ENCODE measurements at regions of chr11 and their contacts with region 1.

Region 1: DNA sequence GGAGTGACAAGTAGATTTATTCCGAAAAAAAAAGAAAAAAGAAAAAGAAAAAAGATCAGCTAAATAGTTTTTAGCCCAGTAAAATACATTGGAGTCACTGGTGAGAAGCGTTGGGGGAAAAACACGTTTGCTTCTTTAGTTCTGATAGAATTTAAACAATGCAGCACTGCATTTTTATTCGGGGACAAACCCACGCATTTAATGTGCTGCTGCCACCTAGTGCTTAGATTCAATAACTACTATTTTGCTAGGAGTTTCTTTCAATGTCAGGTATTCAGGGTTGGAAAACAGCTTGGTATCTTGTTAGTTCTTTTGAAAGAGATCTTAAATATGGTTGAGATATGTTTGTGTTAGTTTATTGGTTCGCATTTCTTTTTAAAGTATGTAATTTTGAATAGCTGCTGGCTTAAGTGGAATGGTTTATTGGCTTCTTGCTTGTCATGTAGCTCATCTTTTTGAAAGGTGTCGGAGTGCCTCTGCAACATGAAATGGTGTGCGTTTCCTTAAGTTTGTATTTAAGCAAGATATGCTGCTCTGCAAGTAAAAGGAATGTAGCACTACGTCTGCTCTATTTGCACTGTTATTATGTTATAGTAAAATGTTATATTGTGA is 41.9 kb downstream of the SVIP start:
- DNase-seq: peak; percentile 56
- H3K4me3 Mint-ChIP-seq: no peak overlapping the region
- H3K27ac Mint-ChIP-seq: no peak overlapping the region
- H3K4me1 Mint-ChIP-seq: no peaks in the 10 kb centered on the region
- H3K27me3 Mint-ChIP-seq: peaks cover 24% of the 10 kb centered on the region
- CTCF ChIP-seq: peak; percentile 52

Region 2: GRCh38 chr11:22244986-22245592 is 542.6 kb before region 1 on chr11:
- CTCF ChIA-PET with region 1: interaction called, 9 read pairs
- POLR2A ChIA-PET with region 1: no interaction called
- intact Hi-C with region 1: loop called (anchors 1 kb)
- DNase-seq: peak; percentile 43
- H3K4me3 Mint-ChIP-seq: no peak overlapping the region
- H3K27ac Mint-ChIP-seq: no peak overlapping the region
- H3K4me1 Mint-ChIP-seq: no peaks in the 10 kb centered on the region
- H3K27me3 Mint-ChIP-seq: peaks cover 61% of the 10 kb centered on the region
- CTCF ChIP-seq: peak; percentile 53

Region 3: GRCh38 chr11:22337596-22338485 is 449.8 kb before region 1 on chr11 and contains the start of gene SLC17A6:
- CTCF ChIA-PET with region 1: interaction called, 19 read pairs
- POLR2A ChIA-PET with region 1: no interaction called
- intact Hi-C with region 1: no loop called
- DNase-seq: peak; percentile 65
- H3K4me3 Mint-ChIP-seq: no peak within 1 kb of the TSS
- H3K27ac Mint-ChIP-seq: no peak within 1 kb of the TSS
- H3K4me1 Mint-ChIP-seq: no peaks in the 10 kb centered on the region
- H3K27me3 Mint-ChIP-seq: peaks cover 71% of the 10 kb centered on the region
- CTCF ChIP-seq: no peak
- total RNA-seq, gene SLC17A6: not detected in 2 replicates

Region 4: DNA sequence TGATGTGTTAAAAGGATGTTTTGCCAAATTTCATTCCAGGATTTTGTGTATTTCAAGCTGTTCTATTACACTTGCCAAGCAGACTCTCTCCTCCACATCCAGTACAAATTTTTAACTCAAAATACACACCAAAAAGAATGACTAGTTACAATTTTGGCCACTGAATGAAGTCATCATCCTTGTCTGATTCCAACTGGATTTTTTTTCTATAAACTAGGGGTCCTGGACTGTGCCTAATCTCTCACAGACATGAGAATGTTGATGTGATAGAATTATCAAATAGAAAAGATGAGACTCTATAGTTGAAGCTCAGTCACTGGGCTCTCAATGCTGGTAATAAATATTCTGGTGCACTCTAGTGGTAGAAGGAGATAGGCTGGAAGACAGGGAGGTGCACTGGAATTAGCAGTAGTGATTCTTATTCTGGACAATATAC is 247.8 kb before region 1 on chr11:
- CTCF ChIA-PET with region 1: interaction called, 30 read pairs
- POLR2A ChIA-PET with region 1: no interaction called
- intact Hi-C with region 1: loop called (anchors 1 kb)
- DNase-seq: peak; percentile 51
- H3K4me3 Mint-ChIP-seq: no peak overlapping the region
- H3K27ac Mint-ChIP-seq: no peak overlapping the region
- H3K4me1 Mint-ChIP-seq: no peaks in the 10 kb centered on the region
- H3K27me3 Mint-ChIP-seq: peaks cover 42% of the 10 kb centered on the region
- CTCF ChIP-seq: peak; percentile 65

Region 5: GRCh38 chr11:22670830-22671229 is 116.8 kb before region 1 on chr11:
- CTCF ChIA-PET with region 1: interaction called, 15 read pairs
- POLR2A ChIA-PET with region 1: interaction called, 3 read pairs
- intact Hi-C with region 1: loop called (anchors 2 kb)
- DNase-seq: peak; percentile 25
- H3K4me3 Mint-ChIP-seq: no peak overlapping the region
- H3K27ac Mint-ChIP-seq: no peak overlapping the region
- H3K4me1 Mint-ChIP-seq: no peaks in the 10 kb centered on the region
- H3K27me3 Mint-ChIP-seq: peaks cover 96% of the 10 kb centered on the region
- CTCF ChIP-seq: peak; percentile 23

Region 6: GRCh38 chr11:22763166-22763565 is 24.5 kb before region 1 on chr11:
- CTCF ChIA-PET with region 1: no interaction called
- POLR2A ChIA-PET with region 1: no interaction called
- intact Hi-C with region 1: no loop called
- DNase-seq: no peak
- H3K4me3 Mint-ChIP-seq: no peak overlapping the region
- H3K27ac Mint-ChIP-seq: no peak overlapping the region
- H3K4me1 Mint-ChIP-seq: no peaks in the 10 kb centered on the region
- H3K27me3 Mint-ChIP-seq: peaks cover 38% of the 10 kb centered on the region
- CTCF ChIP-seq: no peak

Region 7: DNA sequence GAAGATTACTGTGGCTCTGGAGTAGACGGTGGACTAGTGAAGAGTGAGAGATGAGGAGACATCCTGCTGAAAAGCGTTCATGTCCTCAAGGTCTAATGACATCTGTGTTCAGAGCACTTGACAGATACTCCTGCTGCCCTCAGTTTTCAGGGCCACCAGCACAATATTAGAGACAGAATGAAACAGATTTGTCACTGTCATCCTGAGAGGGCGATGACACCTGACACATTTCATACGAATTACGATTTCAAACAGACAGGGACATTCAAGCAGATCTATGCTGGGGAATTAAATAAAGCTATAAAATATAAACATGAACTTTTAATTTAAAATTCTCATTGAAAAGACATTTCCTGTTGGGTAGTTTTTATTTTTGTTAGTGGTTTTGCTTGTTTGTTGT is 12.8 kb after region 1 on chr11:
- CTCF ChIA-PET with region 1: interaction called, 12 read pairs
- POLR2A ChIA-PET with region 1: no interaction called
- intact Hi-C with region 1: no loop called
- DNase-seq: no peak
- H3K4me3 Mint-ChIP-seq: no peak overlapping the region
- H3K27ac Mint-ChIP-seq: no peak overlapping the region
- H3K4me1 Mint-ChIP-seq: no peaks in the 10 kb centered on the region
- H3K27me3 Mint-ChIP-seq: peaks cover 3% of the 10 kb centered on the region
- CTCF ChIP-seq: no peak

Region 8: DNA sequence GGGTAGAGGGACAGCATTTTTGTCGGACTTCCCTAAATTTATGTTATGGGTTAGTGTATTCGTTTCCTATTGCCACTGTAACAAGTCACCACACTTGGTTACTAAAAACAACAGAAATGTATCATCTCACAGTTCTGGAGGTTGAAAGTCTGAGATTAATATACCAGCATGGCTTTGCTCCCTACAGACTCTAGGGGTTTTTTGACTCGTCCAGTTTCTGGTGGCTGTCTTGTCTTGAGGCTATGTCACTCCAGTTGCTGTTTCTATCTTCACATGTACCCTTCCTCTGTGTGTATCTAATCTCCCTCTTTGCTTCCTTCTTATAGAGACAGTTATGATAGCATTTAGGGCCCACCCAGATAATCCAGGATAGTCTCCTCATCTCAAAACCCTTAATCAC is 81.7 kb after region 1 on chr11:
- CTCF ChIA-PET with region 1: no interaction called
- POLR2A ChIA-PET with region 1: no interaction called
- intact Hi-C with region 1: no loop called
- DNase-seq: no peak
- H3K4me3 Mint-ChIP-seq: no peak overlapping the region
- H3K27ac Mint-ChIP-seq: no peak overlapping the region
- H3K4me1 Mint-ChIP-seq: no peaks in the 10 kb centered on the region
- H3K27me3 Mint-ChIP-seq: peaks cover 17% of the 10 kb centered on the region
- CTCF ChIP-seq: no peak

Measured in MCF 10A (cell line).